Activated naive CD4-positive, alpha-beta T cell treated with anti-CD3 and anti-CD28 coated beads for 36 hours (primary cell): ENCODE measurements at regions of chr19 and their contacts with region 1.

Region 1: GRCh38 chr19:16771618-16772017 is 52.0 kb downstream of the NWD1 start:
- DNase-seq: peak; percentile 88
- H3K4me3 Mint-ChIP-seq: no peak overlapping the region
- H3K27ac Mint-ChIP-seq: no peak overlapping the region
- H3K4me1 Mint-ChIP-seq: no peaks in the 10 kb centered on the region
- H3K27me3 Mint-ChIP-seq: peaks cover 11% of the 10 kb centered on the region

Region 2: GRCh38 chr19:16899566-16900075 is 128.0 kb after region 1 on chr19:
- CTCF ChIA-PET with region 1: no interaction called
- intact Hi-C with region 1: loop called (anchors 1 kb)
- DNase-seq: peak; percentile 55
- H3K4me3 Mint-ChIP-seq: no peak overlapping the region
- H3K27ac Mint-ChIP-seq: no peak overlapping the region
- H3K4me1 Mint-ChIP-seq: peaks cover 13% of the 10 kb centered on the region
- H3K27me3 Mint-ChIP-seq: peaks cover 12% of the 10 kb centered on the region